Transverse colon (tissue), 4 donors: ENCODE measurements at regions of chr9 and their contacts with region 1.

Region 1: GRCh38 chr9:94135222-94135621 is 51.0 kb downstream of the PTPDC1 start:
- DNase-seq: no peak
- H3K4me3 ChIP-seq: no peak overlapping the region
- H3K27ac ChIP-seq: peak overlapping the region; percentile 54 to 74 (median 62)
- H3K4me1 ChIP-seq: peaks cover 4 to 31% (median 18%) of the 10 kb centered on the region in 4 donors
- H3K27me3 ChIP-seq: no peaks in the 10 kb centered on the region
- CTCF ChIP-seq: peak in 1 of 5 experiments; percentile 30
- EP300 ChIP-seq: peak; percentile 98
- POLR2A ChIP-seq: no peak

Region 2: GRCh38 chr9:94166237-94166963 is 31.2 kb after region 1 on chr9:
- in situ Hi-C with region 1: no loop called
- intact Hi-C with region 1: loop called (anchors 1 kb)
- DNase-seq: peak; percentile 98
- H3K4me3 ChIP-seq: peak overlapping the region; percentile 74 to 96 (median 94)
- H3K27ac ChIP-seq: peak overlapping the region; percentile 99 to 100 (median 100)
- H3K4me1 ChIP-seq: peaks cover 5 to 42% (median 40%) of the 10 kb centered on the region in 4 donors
- H3K27me3 ChIP-seq: no peaks in the 10 kb centered on the region
- CTCF ChIP-seq: peak in 1 of 5 experiments; percentile 19
- EP300 ChIP-seq: peak; percentile 76
- POLR2A ChIP-seq: peak; percentile 79